AG04450 (cell line): ENCODE measurements at regions of chr1 and their contacts with region 1.

Region 1: GRCh38 chr1:233229288-233229687 is 66.2 kb downstream of the PCNX2 start:
- DNase-seq: no peak
- H3K4me3 ChIP-seq: no peak overlapping the region
- H3K27ac ChIP-seq: no peak overlapping the region
- H3K27me3 ChIP-seq: no peaks in the 10 kb centered on the region
- CTCF ChIP-seq: peak; percentile 29

Region 2: DNA sequence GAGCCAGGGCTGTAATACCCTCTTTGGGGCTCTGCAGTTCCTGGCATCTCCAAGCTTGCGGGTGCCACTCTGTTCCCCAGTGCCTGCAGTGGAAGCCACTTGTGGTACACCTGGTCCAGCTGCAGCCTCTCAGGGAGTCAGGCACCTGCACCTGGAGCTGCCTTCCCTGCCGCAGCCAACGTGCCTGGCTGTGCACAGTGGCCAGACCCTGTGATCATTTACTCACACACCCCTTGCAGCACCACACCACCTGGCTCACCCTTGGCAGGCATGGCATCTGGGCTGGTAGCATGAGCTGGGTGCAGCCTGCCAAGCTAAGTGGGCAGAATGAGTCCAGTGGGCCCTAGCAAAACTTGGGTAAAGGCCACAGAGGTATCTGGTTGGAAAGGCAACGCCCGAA is 330.0 kb before region 1 on chr1:
- CTCF ChIA-PET with region 1: no interaction called
- POLR2A ChIA-PET with region 1: interaction called, 12 read pairs
- DNase-seq: no peak
- H3K4me3 ChIP-seq: no peak overlapping the region
- H3K27ac ChIP-seq: no peak overlapping the region
- H3K27me3 ChIP-seq: peaks cover 4% of the 10 kb centered on the region
- CTCF ChIP-seq: no peak